Esophagus muscularis mucosa (tissue), 4 donors: ENCODE measurements at regions of chr12 and their contacts with region 1.

Region 1: GRCh38 chr12:103877934-103878510 is 37.0 kb upstream of the NT5DC3 start:
- DNase-seq: no peak
- H3K4me3 ChIP-seq: no peak overlapping the region
- H3K27ac ChIP-seq: no peak overlapping the region
- H3K4me1 ChIP-seq: peaks cover 0 to 4% (median 2%) of the 10 kb centered on the region in 4 donors
- H3K27me3 ChIP-seq: no peaks in the 10 kb centered on the region
- CTCF ChIP-seq: peak; percentile 65 to 76 (median 72)
- EP300 ChIP-seq: no peak
- POLR2A ChIP-seq: no peak

Region 2: DNA sequence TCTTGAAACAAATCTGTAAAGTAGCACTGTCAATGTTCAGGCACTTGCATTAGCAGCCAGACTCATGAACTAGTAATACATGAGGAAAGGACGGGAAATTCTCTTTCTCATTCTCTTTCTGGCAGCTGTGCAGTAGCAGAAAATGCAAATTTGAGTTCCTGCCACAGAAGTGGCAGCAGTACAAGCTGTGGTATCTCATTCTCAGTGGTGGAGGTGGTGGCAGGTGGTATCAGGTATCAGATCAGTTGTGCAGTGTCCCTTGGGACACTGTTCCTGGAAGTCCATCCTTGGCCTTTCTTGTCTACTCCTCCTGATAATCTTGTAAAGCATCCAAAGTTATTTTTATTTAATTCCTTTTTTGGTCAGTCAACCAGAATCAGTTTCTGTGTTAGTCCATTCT is 485.3 kb before region 1 on chr12:
- intact Hi-C with region 1: no loop called
- DNase-seq: no peak
- H3K4me3 ChIP-seq: no peak overlapping the region
- H3K27ac ChIP-seq: no peak overlapping the region
- H3K4me1 ChIP-seq: no peaks in the 10 kb centered on the region
- H3K27me3 ChIP-seq: no peaks in the 10 kb centered on the region
- CTCF ChIP-seq: no peak
- EP300 ChIP-seq: no peak
- POLR2A ChIP-seq: no peak

Region 3: GRCh38 chr12:103626498-103626897 is 251.5 kb before region 1 on chr12:
- intact Hi-C with region 1: loop called (anchors 5 kb)
- DNase-seq: peak; percentile 94
- H3K4me3 ChIP-seq: no peak overlapping the region
- H3K27ac ChIP-seq: peak overlapping the region in 2 of 4 donors; percentile 73 to 77
- H3K4me1 ChIP-seq: peaks cover 13 to 29% (median 18%) of the 10 kb centered on the region in 4 donors
- H3K27me3 ChIP-seq: no peaks in the 10 kb centered on the region
- CTCF ChIP-seq: peak in 1 of 3 experiments; percentile 62
- EP300 ChIP-seq: no peak
- POLR2A ChIP-seq: no peak

Region 4: DNA sequence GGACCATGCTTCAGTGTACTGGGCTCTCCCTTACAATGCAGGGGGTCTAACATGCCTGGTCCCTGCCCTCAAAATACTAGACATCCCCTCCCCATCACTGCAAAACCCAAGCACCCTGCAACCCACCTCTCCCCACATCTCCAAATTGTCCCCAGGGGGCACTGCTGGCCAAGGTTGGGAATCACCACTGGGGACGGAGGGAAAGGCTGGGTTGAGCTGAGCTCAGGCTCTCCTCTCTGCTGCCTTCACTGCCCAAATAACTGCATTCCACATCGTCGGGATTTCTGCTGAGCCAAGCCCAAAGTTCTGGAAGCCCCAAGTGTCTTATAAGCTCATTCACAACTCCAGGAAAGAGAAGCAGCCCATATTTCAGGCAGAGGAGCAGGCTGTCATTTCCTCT is 106.6 kb before region 1 on chr12:
- intact Hi-C with region 1: loop called (anchors 10 kb)
- DNase-seq: no peak
- H3K4me3 ChIP-seq: no peak overlapping the region
- H3K27ac ChIP-seq: peak overlapping the region in 2 of 4 donors; percentile 13 to 28
- H3K4me1 ChIP-seq: peaks cover 12 to 45% (median 31%) of the 10 kb centered on the region in 4 donors
- H3K27me3 ChIP-seq: no peaks in the 10 kb centered on the region
- CTCF ChIP-seq: peak; percentile 26 to 36 (median 31)
- EP300 ChIP-seq: no peak
- POLR2A ChIP-seq: no peak

Region 5: GRCh38 chr12:103930034-103930786 is 52.2 kb after region 1 on chr12 and contains the start of gene HSP90B1:
- intact Hi-C with region 1: loop called (anchors 2 kb)
- DNase-seq: peak; percentile 100
- H3K4me3 ChIP-seq: peak within 1 kb of the TSS; percentile 80 to 89 (median 88)
- H3K27ac ChIP-seq: peak within 1 kb of the TSS; percentile 90 to 97 (median 94)
- H3K4me1 ChIP-seq: peaks cover 34 to 57% (median 47%) of the 10 kb centered on the region in 4 donors
- H3K27me3 ChIP-seq: no peaks in the 10 kb centered on the region
- CTCF ChIP-seq: no peak
- EP300 ChIP-seq: no peak
- POLR2A ChIP-seq: peak; percentile 69
- total RNA-seq, gene HSP90B1: 174 to 199 (median 191) TPM

Region 6: DNA sequence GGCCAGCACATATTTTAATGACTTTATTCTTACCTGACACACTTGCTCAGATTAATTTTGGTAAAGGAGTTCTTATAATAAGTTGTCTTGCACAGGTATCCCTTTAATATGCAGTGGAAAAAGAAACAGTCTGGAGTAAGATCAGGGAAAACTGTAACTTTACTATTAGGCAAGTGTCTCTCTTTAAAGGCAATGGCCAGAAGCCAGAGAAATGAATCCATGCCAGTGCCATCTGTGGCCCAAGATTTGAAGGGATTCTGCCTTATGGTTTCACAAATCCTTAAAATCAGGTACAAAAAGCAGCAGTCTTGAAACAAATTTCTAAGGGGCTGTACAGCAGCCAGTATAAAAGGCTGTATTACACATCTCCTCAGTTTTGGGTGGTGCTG is 237.6 kb after region 1 on chr12:
- intact Hi-C with region 1: no loop called
- DNase-seq: no peak
- H3K4me3 ChIP-seq: no peak overlapping the region
- H3K27ac ChIP-seq: no peak overlapping the region
- H3K4me1 ChIP-seq: peaks cover 0 to 20% (median 14%) of the 10 kb centered on the region in 4 donors
- H3K27me3 ChIP-seq: no peaks in the 10 kb centered on the region
- CTCF ChIP-seq: no peak
- EP300 ChIP-seq: no peak
- POLR2A ChIP-seq: no peak

Region 7: DNA sequence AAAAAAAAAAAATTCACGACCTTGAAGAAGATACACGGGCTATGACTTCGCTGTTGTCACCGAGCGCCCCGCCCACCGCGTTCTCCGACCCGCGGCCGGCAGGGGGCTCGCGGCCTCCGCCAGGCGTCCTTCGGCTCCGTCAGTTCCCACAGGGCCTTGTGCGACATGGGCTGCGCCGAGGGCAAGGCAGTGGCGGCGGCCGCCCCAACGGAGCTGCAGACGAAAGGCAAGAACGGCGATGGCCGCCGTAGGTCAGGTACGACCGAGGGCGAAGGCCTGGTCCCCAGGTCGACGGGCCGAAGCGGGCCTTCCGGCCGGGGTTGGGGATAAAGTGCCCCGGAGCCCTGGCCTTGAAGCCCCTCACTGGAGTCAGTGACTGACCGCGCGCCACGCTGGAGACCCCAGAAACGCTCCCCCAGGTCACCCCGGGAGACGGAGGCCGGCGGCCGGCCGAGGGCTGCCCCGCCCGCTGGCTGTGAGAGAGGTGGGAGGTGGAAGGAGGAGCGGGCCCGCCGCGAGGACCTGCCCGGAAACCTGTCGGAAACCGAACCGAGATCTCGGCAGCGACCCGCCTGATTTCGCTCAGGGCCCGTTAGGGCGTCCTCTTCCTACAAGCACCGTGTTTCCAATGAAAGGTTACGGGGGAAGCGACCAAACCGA is 337.7 kb after region 1 on chr12 and contains the start of gene TXNRD1:
- intact Hi-C with region 1: no loop called
- DNase-seq: peak; percentile 94
- H3K4me3 ChIP-seq: peak within 1 kb of the TSS; percentile 65 to 74 (median 65)
- H3K27ac ChIP-seq: peak within 1 kb of the TSS; percentile 81 to 89 (median 87)
- H3K4me1 ChIP-seq: peaks cover 23 to 39% (median 31%) of the 10 kb centered on the region in 4 donors
- H3K27me3 ChIP-seq: no peaks in the 10 kb centered on the region
- CTCF ChIP-seq: peak; percentile 85 to 87 (median 87)
- EP300 ChIP-seq: no peak
- POLR2A ChIP-seq: no peak
- total RNA-seq, gene TXNRD1: 243 to 594 (median 299) TPM

Region 8: GRCh38 chr12:104582739-104583138 is 704.7 kb after region 1 on chr12:
- intact Hi-C with region 1: no loop called
- DNase-seq: no peak
- H3K4me3 ChIP-seq: no peak overlapping the region
- H3K27ac ChIP-seq: no peak overlapping the region
- H3K4me1 ChIP-seq: peaks cover 0 to 10% (median 4%) of the 10 kb centered on the region in 4 donors
- H3K27me3 ChIP-seq: no peaks in the 10 kb centered on the region
- CTCF ChIP-seq: no peak
- EP300 ChIP-seq: no peak
- POLR2A ChIP-seq: no peak